HepG2 (cell line): ENCODE measurements at regions of chr4 and their contacts with region 1.

Region 1: GRCh38 chr4:140359562-140360427 is 13.7 kb upstream of the SCOC start:
- DNase-seq: peak; percentile 78
- ATAC-seq: peak; percentile 95
- H3K4me3 ChIP-seq: no peak overlapping the region
- H3K27ac ChIP-seq: no peak overlapping the region
- H3K4me1 ChIP-seq: peaks cover 28% of the 10 kb centered on the region
- H3K27me3 ChIP-seq: no peaks in the 10 kb centered on the region
- CTCF ChIP-seq: peak; percentile 71
- EP300 ChIP-seq: no peak
- POLR2A ChIP-seq: no peak
- RAD21 ChIP-seq: 0 out of 2 replicates have a peak, but pooled peaks have one; percentile 16

Region 2: DNA sequence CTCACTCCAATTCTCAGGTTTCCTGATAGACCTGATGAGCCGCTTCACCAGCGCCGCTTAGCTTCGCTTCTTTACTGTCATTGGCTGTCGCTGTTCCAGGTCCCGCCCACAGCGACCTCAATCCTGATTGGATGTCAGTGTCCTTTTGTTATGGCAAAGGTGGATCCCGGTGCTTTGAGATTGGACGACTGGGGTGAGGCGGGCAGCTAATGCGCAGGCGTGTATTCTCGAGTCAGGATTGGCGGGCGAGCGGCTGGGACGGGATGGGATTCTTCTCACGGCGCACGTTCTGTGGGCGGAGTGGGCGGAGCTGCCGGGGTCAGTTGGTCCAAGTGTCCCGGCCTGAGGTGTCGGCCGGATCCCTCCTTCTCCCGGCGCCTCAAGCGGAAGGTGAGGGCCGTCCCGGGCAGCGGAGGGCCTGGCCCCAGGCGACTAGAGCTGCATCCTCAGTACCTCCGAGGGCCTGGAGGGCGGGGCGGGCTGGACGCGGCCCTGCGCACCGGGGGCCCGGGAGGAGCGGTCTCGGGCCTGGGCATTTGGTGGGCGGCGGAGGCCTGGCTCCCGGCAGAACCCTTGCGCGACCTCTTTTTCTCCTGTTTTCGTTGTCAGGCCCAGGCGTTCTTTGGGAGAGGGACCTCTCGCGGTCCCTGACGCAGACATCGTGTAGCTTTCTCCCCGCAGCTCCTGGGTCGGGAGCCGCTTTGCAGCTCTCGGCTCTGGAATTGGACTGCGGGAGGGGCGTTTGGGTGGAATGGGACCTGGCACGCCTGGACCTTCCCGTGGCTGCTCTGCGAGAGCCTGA is 13.7 kb after region 1 on chr4 and contains the start of gene SCOC:
- CTCF ChIA-PET with region 1: interaction called, 12 read pairs
- POLR2A ChIA-PET with region 1: interaction called, 56 read pairs
- in situ Hi-C with region 1: no loop called
- intact Hi-C with region 1: no loop called
- DNase-seq: peak; percentile 99
- ATAC-seq: peak; percentile 96
- H3K4me3 ChIP-seq: peak within 1 kb of the TSS; percentile 78 to 86 (median 85)
- H3K27ac ChIP-seq: peak within 1 kb of the TSS; percentile 85
- H3K4me1 ChIP-seq: peaks cover 45% of the 10 kb centered on the region
- H3K27me3 ChIP-seq: no peaks in the 10 kb centered on the region
- CTCF ChIP-seq: no peak
- EP300 ChIP-seq: no peak
- POLR2A ChIP-seq: peak in 1 of 2 experiments; percentile 82; a peak in 3 of 4 replicates
- RAD21 ChIP-seq: no peak
- total RNA-seq, gene SCOC: 65.2 and 109 TPM in 2 replicates

Region 3: GRCh38 chr4:140427106-140427961 is 67.5 kb after region 1 on chr4 and contains the start of gene CLGN:
- CTCF ChIA-PET with region 1: interaction called, 30 read pairs
- POLR2A ChIA-PET with region 1: interaction called, 11 read pairs
- in situ Hi-C with region 1: no loop called
- intact Hi-C with region 1: loop called (anchors 1 kb)
- DNase-seq: peak; percentile 77
- ATAC-seq: peak; percentile 94
- H3K4me3 ChIP-seq: peak within 1 kb of the TSS; percentile 82 to 93 (median 92)
- H3K27ac ChIP-seq: peak within 1 kb of the TSS; percentile 75
- H3K4me1 ChIP-seq: peaks cover 24% of the 10 kb centered on the region
- H3K27me3 ChIP-seq: no peaks in the 10 kb centered on the region; a peak in 1 of 5 replicates
- CTCF ChIP-seq: peak; percentile 86
- EP300 ChIP-seq: no peak; a peak in 1 of 4 replicates
- POLR2A ChIP-seq: peak; percentile 66 to 80
- RAD21 ChIP-seq: peak; percentile 72
- total RNA-seq, gene CLGN: 10.0 and 17.0 TPM in 2 replicates

Region 4: GRCh38 chr4:140609548-140610425 is 250.0 kb after region 1 on chr4:
- CTCF ChIA-PET with region 1: interaction called, 29 read pairs
- POLR2A ChIA-PET with region 1: no interaction called
- in situ Hi-C with region 1: loop called (anchors 10 kb)
- intact Hi-C with region 1: loop called (anchors 1 kb)
- DNase-seq: peak; percentile 53
- ATAC-seq: peak; percentile 92
- H3K4me3 ChIP-seq: peak overlapping the region in 1 of 3 experiments; percentile 9; a peak in 1 of 6 replicates
- H3K27ac ChIP-seq: no peak overlapping the region
- H3K4me1 ChIP-seq: peaks cover 27% of the 10 kb centered on the region
- H3K27me3 ChIP-seq: no peaks in the 10 kb centered on the region
- CTCF ChIP-seq: peak; percentile 69
- EP300 ChIP-seq: no peak
- POLR2A ChIP-seq: no peak
- RAD21 ChIP-seq: peak; percentile 32; the same call in 1 of the 2 replicates

Region 5: GRCh38 chr4:140637836-140638235 is 278.0 kb after region 1 on chr4:
- CTCF ChIA-PET with region 1: interaction called, 4 read pairs
- POLR2A ChIA-PET with region 1: no interaction called
- in situ Hi-C with region 1: no loop called
- intact Hi-C with region 1: loop called (anchors 5 kb)
- DNase-seq: peak; percentile 59
- ATAC-seq: peak; percentile 19; the same call in 1 of the 3 replicates
- H3K4me3 ChIP-seq: no peak overlapping the region
- H3K27ac ChIP-seq: no peak overlapping the region
- H3K4me1 ChIP-seq: peaks cover 82% of the 10 kb centered on the region
- H3K27me3 ChIP-seq: no peaks in the 10 kb centered on the region
- CTCF ChIP-seq: peak; percentile 79
- EP300 ChIP-seq: no peak
- POLR2A ChIP-seq: no peak
- RAD21 ChIP-seq: peak; percentile 45; the same call in 1 of the 2 replicates